ENCODE measurements at regions of chr9 and their contacts with region 1.

Region 1: DNA sequence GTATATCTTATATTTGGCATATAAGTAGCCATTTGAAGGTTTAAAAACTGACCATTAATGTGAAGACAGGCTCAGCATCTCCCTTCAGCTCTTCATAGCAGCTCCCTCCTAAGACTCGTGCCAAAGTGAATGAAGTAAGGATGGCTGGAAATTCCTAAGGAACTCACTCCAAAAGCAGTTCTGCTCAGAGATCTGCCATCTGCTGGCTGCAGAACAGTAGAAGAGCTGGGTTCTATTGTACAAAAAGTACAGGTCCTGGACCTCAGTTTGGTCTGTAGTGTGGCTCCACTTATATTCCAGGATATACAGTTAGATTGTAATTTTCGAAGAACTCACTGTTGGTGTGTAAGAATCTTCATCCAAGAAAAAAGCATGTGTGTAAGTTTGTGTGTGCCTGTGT is 104.9 kb upstream of the RUSC2 start:
- DNase-seq: peak; percentile 52
- H3K4me3 ChIP-seq: no peak overlapping the region
- H3K27ac ChIP-seq: no peak overlapping the region
- H3K4me1 ChIP-seq: no peaks in the 10 kb centered on the region
- H3K27me3 ChIP-seq: no peaks in the 10 kb centered on the region
- CTCF ChIP-seq: peak; percentile 10 to 48
- POLR2A ChIP-seq: no peak

Region 2: DNA sequence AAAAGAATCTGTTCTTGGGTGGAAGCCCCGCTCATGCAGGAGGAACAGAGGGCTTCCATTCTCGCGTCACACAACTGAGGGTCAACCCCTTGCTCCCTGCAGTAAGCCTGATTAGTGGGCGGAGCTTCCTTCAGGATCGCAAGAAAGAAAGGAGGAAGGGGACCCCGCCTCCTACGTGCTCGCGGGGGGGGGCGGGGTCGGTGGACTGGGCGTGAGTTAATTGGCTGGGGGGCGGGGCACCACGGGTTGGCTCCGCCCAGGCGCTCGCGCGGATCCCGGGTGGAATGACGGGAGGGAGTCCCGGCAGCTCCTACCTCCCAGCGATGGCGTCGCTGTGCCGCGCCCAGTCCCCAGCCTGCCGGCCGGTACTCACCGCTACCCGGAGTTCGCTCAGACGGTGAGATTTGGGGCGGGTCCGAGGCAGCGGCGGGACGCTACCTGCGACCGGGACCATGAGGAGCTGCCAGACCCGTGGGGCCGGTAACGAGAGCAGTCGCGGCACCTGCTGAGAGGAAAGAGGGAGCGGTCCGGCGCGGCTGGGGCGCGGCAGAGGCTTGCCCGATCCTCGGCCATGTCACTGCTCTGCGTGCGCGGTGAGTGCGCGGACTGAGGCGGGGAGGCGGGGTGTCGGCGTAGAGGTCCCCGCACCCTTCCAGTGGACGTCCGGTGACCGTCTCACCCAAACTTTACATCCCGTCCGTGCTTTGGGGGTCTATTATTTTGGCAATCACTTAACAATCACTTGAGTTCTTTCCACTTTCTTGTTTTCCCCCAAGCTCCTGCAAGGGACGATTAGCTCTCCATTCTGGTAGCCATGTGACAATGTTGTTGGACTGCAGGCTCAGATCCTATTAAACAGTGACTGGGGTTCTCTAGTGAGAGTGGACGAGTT is 223.1 kb before region 1 on chr9 and contains the start of gene UNC13B:
- CTCF ChIA-PET with region 1: interaction called, 10 read pairs
- POLR2A ChIA-PET with region 1: no interaction called
- dilution Hi-C with region 1: no loop called
- intact Hi-C with region 1: no loop called
- DNase-seq: peak; percentile 96
- H3K4me3 ChIP-seq: peak within 1 kb of the TSS; percentile 86 to 95 (median 94)
- H3K27ac ChIP-seq: peak within 1 kb of the TSS; percentile 70
- H3K4me1 ChIP-seq: peaks cover 34% of the 10 kb centered on the region
- H3K27me3 ChIP-seq: no peaks in the 10 kb centered on the region
- CTCF ChIP-seq: no peak
- POLR2A ChIP-seq: peak; percentile 96
- total RNA-seq, gene UNC13B: 44.2 and 46.2 TPM in 2 replicates

Region 3: DNA sequence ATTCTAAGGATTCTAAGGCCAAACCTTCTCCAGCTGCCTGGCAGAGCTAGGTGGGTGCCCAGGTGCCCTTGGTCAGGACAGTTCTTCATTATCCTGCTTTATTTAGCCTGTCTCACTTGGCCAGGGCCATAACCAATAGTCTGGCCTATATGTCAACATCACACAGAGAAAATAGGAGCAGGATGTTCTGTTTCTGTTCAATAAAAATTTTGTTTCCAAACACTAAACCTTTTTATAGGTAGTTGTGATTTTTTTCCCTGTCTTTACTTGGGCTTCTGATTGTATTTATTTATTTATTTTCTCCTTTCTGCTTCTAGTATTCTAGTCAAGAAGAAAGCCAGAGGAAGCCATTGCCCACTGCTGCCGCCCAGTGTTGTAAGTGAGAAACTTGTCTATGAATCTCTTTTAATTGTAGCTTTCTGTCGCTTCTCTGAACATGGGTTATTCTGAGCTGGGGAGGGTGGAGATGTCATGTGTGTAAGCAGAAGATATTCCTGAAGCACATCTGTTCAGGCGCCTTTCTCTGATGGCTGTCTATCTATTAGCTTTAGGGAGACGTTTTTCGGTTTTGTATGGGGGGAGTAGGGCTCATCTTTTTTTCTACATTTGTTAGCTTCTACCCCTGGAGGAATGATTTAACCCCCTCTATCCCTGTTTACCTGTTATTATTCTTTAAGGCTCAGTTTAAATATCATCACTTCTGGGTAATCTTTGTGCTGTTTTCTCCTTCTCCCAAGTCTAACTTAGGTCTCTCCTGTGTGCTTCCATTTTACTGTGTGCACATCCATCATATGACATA is 126.2 kb before region 1 on chr9:
- CTCF ChIA-PET with region 1: interaction called, 34 read pairs
- POLR2A ChIA-PET with region 1: no interaction called
- dilution Hi-C with region 1: no loop called
- intact Hi-C with region 1: no loop called
- DNase-seq: peak; percentile 82
- H3K4me3 ChIP-seq: no peak overlapping the region
- H3K27ac ChIP-seq: no peak overlapping the region
- H3K4me1 ChIP-seq: no peaks in the 10 kb centered on the region
- H3K27me3 ChIP-seq: no peaks in the 10 kb centered on the region
- CTCF ChIP-seq: peak; percentile 55 to 67
- POLR2A ChIP-seq: no peak

Region 4: DNA sequence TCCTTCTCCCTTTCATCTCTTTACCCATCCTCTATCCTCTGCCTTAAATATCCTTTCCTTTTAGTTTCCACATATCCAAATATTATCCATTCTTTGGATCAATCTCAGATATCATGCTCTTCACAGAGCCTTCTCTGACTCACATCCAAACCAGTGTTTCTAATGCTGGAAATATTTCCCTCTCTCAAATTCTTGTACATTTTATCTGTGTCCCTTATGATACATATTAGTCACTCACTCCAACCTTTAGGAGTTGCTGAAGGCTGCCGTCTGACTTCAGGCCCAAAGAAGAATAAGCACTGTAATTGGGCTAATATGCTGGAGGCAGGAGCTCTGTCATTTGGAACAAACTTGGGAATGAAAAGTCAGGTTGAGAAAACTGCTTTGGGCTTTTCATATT is 51.5 kb before region 1 on chr9:
- CTCF ChIA-PET with region 1: interaction called, 13 read pairs
- POLR2A ChIA-PET with region 1: no interaction called
- dilution Hi-C with region 1: no loop called
- intact Hi-C with region 1: no loop called
- DNase-seq: peak; percentile 59
- H3K4me3 ChIP-seq: no peak overlapping the region
- H3K27ac ChIP-seq: peak overlapping the region; percentile 93
- H3K4me1 ChIP-seq: peaks cover 37% of the 10 kb centered on the region
- H3K27me3 ChIP-seq: no peaks in the 10 kb centered on the region
- CTCF ChIP-seq: no peak
- POLR2A ChIP-seq: no peak

Region 5: GRCh38 chr9:35367451-35367850 is 17.6 kb before region 1 on chr9:
- CTCF ChIA-PET with region 1: interaction called, 19 read pairs
- POLR2A ChIA-PET with region 1: no interaction called
- dilution Hi-C with region 1: no loop called
- intact Hi-C with region 1: no loop called
- DNase-seq: peak; percentile 91
- H3K4me3 ChIP-seq: no peak overlapping the region
- H3K27ac ChIP-seq: peak overlapping the region; percentile 64
- H3K4me1 ChIP-seq: peaks cover 31% of the 10 kb centered on the region
- H3K27me3 ChIP-seq: no peaks in the 10 kb centered on the region
- CTCF ChIP-seq: no peak
- POLR2A ChIP-seq: no peak